ENCODE measurements at regions of chr14 and their contacts with region 1.

Region 1: DNA sequence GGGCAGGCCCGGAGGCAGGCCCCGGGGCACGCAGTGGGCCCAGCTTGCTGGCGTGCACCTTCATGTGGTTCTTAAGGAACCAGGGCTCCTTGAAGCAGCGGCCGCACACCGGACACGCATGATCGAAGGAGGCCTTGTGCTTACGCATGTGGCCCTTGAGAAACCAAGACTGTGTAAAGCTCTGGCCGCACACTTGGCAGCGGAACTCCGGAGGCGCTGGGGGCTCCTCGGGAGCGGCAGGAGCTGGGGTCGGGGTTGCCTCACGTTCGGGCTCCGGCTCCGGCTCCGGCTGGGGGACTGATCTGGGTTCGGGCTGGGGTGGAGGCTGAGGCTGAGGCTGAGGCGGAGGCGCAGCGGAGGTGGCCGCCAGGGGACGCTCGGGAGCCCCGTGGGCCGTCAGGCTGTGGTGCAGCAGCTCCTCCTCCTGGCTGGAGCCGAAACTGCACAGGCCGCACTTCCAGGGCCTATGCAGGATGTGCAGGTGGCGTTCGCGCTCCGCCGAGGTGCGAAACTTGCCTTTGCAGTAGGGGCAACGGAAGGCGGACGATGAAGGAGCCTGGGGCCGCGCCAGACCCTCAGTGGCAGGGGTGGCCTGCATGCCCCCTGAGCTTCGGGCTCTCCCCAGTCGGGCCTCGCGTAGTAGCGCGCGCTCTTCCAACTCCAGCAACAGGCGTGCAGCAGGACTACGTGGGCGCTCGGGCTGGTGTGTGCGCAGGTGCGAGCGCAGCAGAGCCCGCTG is 6.0 kb downstream of the ZNF219 start:
- DNase-seq: peak; percentile 86 to 97 (median 92)
- ATAC-seq: peak; percentile 89
- H3K4me3 ChIP-seq: no peak overlapping the region
- H3K4me3 Mint-ChIP-seq: no peak overlapping the region
- H3K27ac ChIP-seq: no peak overlapping the region
- H3K27ac Mint-ChIP-seq: peak overlapping the region; percentile 71
- H3K4me1 ChIP-seq: peaks cover 18% of the 10 kb centered on the region
- H3K4me1 Mint-ChIP-seq: peaks cover 28% of the 10 kb centered on the region
- H3K27me3 ChIP-seq: no peaks in the 10 kb centered on the region
- H3K27me3 Mint-ChIP-seq: no peaks in the 10 kb centered on the region
- CTCF ChIP-seq: peak; percentile 100

Region 2: DNA sequence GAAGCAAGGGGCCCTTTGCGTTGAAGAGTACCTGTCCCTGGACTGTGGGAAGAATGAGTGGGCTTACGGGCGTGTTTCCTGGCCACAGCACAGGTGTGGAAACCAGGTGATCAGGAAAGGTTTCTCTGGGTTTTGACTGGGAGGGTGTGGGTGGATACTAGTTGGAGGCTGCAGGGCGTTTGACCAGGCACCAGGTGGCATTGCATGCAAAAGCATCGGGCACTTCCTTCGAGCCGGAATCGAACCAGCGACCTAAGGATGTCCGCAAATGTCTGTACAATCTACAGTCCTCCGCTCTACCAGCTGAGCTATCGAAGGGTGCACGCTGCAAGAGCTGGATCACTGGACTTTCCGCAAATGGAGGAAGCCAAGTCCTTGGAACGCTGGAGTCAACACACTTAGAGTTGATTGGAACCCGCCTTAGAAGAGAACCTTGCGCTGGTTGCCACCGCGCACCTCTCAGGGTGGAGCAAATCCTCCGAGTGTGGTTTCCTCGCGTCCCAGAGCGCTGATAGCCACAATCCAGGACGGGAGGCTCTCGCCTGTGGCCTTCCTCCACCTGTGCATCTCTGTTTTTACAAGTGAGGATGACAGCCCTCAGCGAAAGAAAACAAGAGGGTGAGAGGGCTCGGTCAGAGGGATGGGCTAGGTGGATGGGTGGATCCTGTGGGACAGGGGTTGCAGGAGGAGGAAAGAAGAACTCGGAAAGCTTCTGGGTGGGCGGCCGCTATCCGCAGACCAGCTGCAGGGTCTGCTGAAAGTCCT is 429.3 kb before region 1 on chr14:
- CTCF ChIA-PET with region 1: no interaction called
- POLR2A ChIA-PET with region 1: no interaction called
- intact Hi-C with region 1: no loop called
- DNase-seq: peak; percentile 57 to 89 (median 73)
- ATAC-seq: peak; percentile 90
- H3K4me3 ChIP-seq: peak overlapping the region; percentile 34 to 50
- H3K4me3 Mint-ChIP-seq: peak overlapping the region; percentile 77
- H3K27ac ChIP-seq: no peak overlapping the region
- H3K27ac Mint-ChIP-seq: no peak overlapping the region
- H3K4me1 ChIP-seq: peaks cover 14% of the 10 kb centered on the region
- H3K4me1 Mint-ChIP-seq: peaks cover 27% of the 10 kb centered on the region
- H3K27me3 ChIP-seq: no peaks in the 10 kb centered on the region
- H3K27me3 Mint-ChIP-seq: peaks cover 30% of the 10 kb centered on the region
- CTCF ChIP-seq: peak; percentile 54

Region 3: GRCh38 chr14:20904393-20905029 is 187.9 kb before region 1 on chr14:
- CTCF ChIA-PET with region 1: no interaction called
- POLR2A ChIA-PET with region 1: no interaction called
- intact Hi-C with region 1: no loop called
- DNase-seq: no peak
- ATAC-seq: no peak
- H3K4me3 ChIP-seq: no peak overlapping the region
- H3K4me3 Mint-ChIP-seq: no peak overlapping the region
- H3K27ac ChIP-seq: no peak overlapping the region
- H3K27ac Mint-ChIP-seq: no peak overlapping the region
- H3K4me1 ChIP-seq: no peaks in the 10 kb centered on the region
- H3K4me1 Mint-ChIP-seq: no peaks in the 10 kb centered on the region
- H3K27me3 ChIP-seq: no peaks in the 10 kb centered on the region
- H3K27me3 Mint-ChIP-seq: peaks cover 12% of the 10 kb centered on the region
- CTCF ChIP-seq: no peak

Region 4: GRCh38 chr14:21024585-21025370 is 67.7 kb before region 1 on chr14 and contains the start of gene NDRG2:
- CTCF ChIA-PET with region 1: interaction called, 169 read pairs
- POLR2A ChIA-PET with region 1: no interaction called
- intact Hi-C with region 1: loop called (anchors 1 kb)
- DNase-seq: peak; percentile 60 to 87 (median 80)
- ATAC-seq: peak; percentile 91
- H3K4me3 ChIP-seq: peak within 1 kb of the TSS; percentile 84 to 86
- H3K4me3 Mint-ChIP-seq: peak within 1 kb of the TSS; percentile 92
- H3K27ac ChIP-seq: peak within 1 kb of the TSS in 1 of 2 experiments; percentile 33
- H3K27ac Mint-ChIP-seq: peak within 1 kb of the TSS; percentile 70
- H3K4me1 ChIP-seq: peaks cover 13% of the 10 kb centered on the region
- H3K4me1 Mint-ChIP-seq: peaks cover 19% of the 10 kb centered on the region
- H3K27me3 ChIP-seq: no peaks in the 10 kb centered on the region
- H3K27me3 Mint-ChIP-seq: no peaks in the 10 kb centered on the region
- CTCF ChIP-seq: no peak
- total RNA-seq, gene NDRG2: 18.9 to 24.8 TPM

Region 5: DNA sequence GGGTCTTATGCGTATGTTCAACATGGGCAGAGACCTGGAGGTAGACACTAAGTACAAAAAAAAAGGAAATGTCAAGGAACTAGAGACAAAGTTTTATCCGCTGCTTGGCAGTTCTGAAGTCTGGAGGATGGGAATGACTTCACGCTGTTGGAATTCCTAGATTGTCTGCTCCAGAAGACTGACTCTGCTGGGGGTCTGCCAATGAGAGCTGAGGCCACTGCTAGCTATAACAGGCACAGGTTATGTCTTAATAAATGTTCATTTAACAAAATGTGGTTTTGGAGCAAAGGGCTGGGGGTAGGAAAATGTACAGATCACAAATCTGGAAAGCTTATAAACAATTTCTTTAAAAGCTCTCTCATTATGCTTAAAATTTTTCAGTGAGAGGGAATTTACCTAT is 29.0 kb before region 1 on chr14:
- CTCF ChIA-PET with region 1: interaction called, 87 read pairs
- POLR2A ChIA-PET with region 1: interaction called, 4 read pairs
- intact Hi-C with region 1: loop called (anchors 1 kb)
- DNase-seq: no peak
- ATAC-seq: no peak
- H3K4me3 ChIP-seq: no peak overlapping the region
- H3K4me3 Mint-ChIP-seq: no peak overlapping the region
- H3K27ac ChIP-seq: no peak overlapping the region
- H3K27ac Mint-ChIP-seq: no peak overlapping the region
- H3K4me1 ChIP-seq: peaks cover 2% of the 10 kb centered on the region
- H3K4me1 Mint-ChIP-seq: peaks cover 3% of the 10 kb centered on the region
- H3K27me3 ChIP-seq: peaks cover 2 to 5% of the 10 kb centered on the region in 2 experiments
- H3K27me3 Mint-ChIP-seq: peaks cover 53% of the 10 kb centered on the region
- CTCF ChIP-seq: no peak

Region 6: DNA sequence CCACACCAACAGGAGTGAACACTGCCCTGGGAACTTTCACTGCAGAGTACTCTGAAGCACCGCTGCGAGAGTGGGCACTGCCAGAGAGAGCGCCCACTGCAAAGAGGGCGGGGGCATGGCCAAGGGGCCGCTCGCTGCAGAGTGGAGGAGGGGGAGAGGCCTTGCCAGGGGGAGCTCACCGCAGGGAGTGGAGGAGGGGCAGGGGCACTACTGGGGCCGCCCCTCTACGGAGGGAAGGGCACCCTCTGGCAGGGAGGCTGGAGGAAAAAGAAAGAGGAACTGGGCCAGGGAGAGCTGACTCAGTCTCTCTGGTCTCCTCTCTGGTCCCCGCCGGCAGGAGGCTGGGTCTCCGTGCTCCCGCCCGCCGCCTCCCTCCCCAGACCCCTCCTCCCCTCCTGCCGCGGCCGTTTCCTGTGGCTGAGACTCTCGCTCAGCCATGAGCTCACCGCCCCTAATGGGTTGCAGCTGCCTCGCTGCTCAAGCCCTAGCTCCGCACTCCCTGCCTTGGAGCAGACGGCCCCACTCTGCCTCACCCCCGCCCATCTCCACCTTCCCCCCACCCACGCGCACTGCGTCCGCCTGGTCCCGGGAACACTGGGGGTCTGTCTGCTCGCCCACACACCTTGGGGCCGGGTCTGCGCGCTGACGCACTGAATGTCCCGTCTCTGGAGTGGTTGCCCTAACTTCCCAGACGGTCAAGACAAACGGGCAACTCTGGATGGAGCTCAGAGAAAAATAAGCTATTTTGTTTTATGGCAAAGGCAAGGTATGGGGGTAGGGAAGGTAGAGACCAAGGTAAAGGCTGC is 21.0 kb before region 1 on chr14:
- CTCF ChIA-PET with region 1: interaction called, 87 read pairs
- POLR2A ChIA-PET with region 1: interaction called, 7 read pairs
- intact Hi-C with region 1: loop called (anchors 1 kb)
- DNase-seq: peak in 6 of 9 experiments; percentile 32 to 64 (median 52)
- ATAC-seq: peak; percentile 43
- H3K4me3 ChIP-seq: peak overlapping the region; percentile 47 to 59
- H3K4me3 Mint-ChIP-seq: peak overlapping the region; percentile 83
- H3K27ac ChIP-seq: no peak overlapping the region
- H3K27ac Mint-ChIP-seq: no peak overlapping the region
- H3K4me1 ChIP-seq: peaks cover 35% of the 10 kb centered on the region
- H3K4me1 Mint-ChIP-seq: peaks cover 34% of the 10 kb centered on the region
- H3K27me3 ChIP-seq: peaks cover 33 to 36% of the 10 kb centered on the region in 2 experiments
- H3K27me3 Mint-ChIP-seq: peaks cover 60% of the 10 kb centered on the region
- CTCF ChIP-seq: no peak

Measured in CD8-positive, alpha-beta T cell (primary cell).